Sciatic nerve (tissue), 2 donors: ENCODE measurements at regions of chr13 and their contacts with region 1.

Region 1: DNA sequence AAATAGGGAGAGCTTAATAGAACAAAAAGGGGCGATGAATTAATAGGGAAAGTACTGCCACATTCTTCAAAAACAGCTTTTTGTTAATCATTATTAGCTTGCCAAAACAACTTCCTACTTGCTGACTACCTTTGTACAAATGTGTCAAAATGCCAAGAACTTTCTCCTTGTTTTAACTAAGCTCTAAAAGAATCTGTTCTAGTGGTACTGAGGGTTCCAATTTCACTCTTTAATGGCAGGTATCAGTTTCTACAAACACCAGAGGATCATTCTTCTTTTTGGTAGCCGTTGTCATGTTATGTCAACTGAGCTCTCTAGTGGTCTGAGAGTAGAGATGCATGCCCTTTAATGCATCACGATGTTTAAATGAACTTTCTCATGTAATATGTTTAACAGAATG is 29.4 kb upstream of the FBXL3 start:
- DNase-seq: no peak
- ATAC-seq: no peak

Region 2: DNA sequence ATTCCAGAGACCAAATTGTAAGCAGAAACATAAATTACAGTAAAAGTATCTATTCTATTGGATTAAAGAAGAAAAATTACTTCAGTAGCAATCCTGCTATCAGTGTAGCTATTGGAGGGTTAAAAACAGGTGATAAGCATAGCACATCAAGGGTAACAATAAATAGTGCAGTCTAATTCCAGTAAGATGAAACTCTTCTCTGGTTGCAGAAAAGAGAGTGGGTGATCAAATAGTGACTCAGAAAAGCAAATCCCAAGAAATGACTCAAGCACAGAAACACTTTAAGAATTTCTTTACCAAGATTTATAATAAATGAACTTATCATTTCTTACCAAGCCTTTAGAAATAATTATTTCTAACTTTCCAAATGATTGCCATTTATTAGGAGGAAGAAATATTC is 1284.6 kb before region 1 on chr13:
- intact Hi-C with region 1: loop called (anchors 5 kb)
- DNase-seq: no peak
- ATAC-seq: no peak